ENCODE measurements at regions of chr6 and their contacts with region 1.

Region 1: GRCh38 chr6:106003268-106003987 is 82.7 kb upstream of the PRDM1 start:
- DNase-seq: no peak
- H3K4me3 ChIP-seq: no peak overlapping the region
- H3K27ac ChIP-seq: no peak overlapping the region
- H3K4me1 ChIP-seq: no peaks in the 10 kb centered on the region
- H3K27me3 ChIP-seq: peaks cover 0 to 20% (median 0%) of the 10 kb centered on the region in 4 donors
- CTCF ChIP-seq: no peak
- EP300 ChIP-seq: no peak
- POLR2A ChIP-seq: no peak

Region 2: DNA sequence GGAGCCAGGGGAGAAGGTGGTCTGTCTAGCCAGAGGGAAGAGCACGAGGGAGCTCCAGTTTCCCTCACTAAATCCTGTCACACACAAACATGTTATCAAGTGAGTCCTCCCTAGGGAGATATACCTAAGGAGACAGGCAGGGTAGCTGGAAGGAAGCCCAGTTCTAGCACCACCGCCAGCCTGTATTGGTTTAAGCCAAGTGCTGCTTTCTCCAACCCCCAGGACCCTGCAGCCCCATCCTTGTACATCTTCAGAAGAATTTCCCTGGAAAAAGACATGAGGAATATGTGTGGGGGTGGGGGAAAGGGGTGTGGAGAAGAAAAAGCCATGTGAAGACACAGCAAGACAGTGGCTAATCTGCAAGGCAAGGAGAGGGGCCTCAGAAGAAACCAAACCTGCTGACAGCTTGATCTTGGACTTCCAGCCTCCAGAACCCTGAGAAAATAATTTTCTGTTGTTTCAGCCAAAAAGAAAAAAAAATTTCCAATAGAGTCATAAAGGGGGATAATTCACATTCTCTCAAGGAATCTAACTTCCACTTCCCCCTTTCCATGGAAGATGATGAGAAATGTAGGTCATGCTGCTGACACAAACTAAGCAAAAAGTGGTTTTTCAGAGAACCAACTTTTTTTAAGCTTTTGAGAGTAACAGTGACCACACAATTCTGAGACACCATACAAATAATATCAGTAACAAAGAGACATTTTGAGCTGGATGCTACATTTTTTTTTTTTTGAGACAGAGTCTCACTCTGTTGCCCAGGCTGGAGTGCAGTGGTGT is 20.5 kb before region 1 on chr6:
- intact Hi-C with region 1: loop called (anchors 2 kb)
- DNase-seq: no peak
- H3K4me3 ChIP-seq: no peak overlapping the region
- H3K27ac ChIP-seq: no peak overlapping the region
- H3K4me1 ChIP-seq: peaks cover 6 to 23% (median 21%) of the 10 kb centered on the region in 4 donors
- H3K27me3 ChIP-seq: peaks cover 0 to 75% (median 24%) of the 10 kb centered on the region in 4 donors
- CTCF ChIP-seq: no peak
- EP300 ChIP-seq: no peak
- POLR2A ChIP-seq: no peak

Region 3: GRCh38 chr6:106114492-106115265 is 111.3 kb after region 1 on chr6:
- intact Hi-C with region 1: no loop called
- DNase-seq: no peak
- H3K4me3 ChIP-seq: no peak overlapping the region
- H3K27ac ChIP-seq: no peak overlapping the region
- H3K4me1 ChIP-seq: no peaks in the 10 kb centered on the region
- H3K27me3 ChIP-seq: no peaks in the 10 kb centered on the region
- CTCF ChIP-seq: no peak
- EP300 ChIP-seq: no peak
- POLR2A ChIP-seq: no peak

Region 4: GRCh38 chr6:106141441-106142237 is 138.2 kb after region 1 on chr6:
- intact Hi-C with region 1: no loop called
- DNase-seq: no peak
- H3K4me3 ChIP-seq: no peak overlapping the region
- H3K27ac ChIP-seq: no peak overlapping the region
- H3K4me1 ChIP-seq: no peaks in the 10 kb centered on the region
- H3K27me3 ChIP-seq: peaks cover 0 to 4% (median 0%) of the 10 kb centered on the region in 4 donors
- CTCF ChIP-seq: no peak
- EP300 ChIP-seq: no peak
- POLR2A ChIP-seq: no peak